Left colon (tissue), 2 donors: ENCODE measurements at regions of chr11 and their contacts with region 1.

Region 1: DNA sequence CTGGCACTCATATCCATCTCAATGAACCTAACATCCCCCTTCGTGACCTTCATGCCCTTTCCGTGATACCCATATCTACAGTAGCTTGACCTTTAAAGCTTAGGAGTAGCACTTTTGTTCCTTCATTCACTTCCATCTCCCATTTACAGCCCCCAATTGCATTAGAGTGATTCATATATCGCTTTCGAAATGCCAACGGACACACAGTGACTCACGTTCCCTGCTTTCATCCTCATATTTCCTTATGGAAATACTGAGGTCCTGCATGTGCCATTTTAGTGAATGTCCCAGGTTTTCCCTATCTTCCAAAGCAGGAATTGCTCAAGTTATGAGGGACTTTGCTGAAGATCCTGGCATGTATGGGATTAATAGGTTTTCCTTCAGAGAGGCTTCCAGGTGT is 44.3 kb upstream of the CEP126 start:
- DNase-seq: no peak
- ATAC-seq: peak; percentile 44

Region 2: GRCh38 chr11:101929294-101929916 is 58.9 kb after region 1 on chr11:
- intact Hi-C with region 1: no loop called
- DNase-seq: no peak
- ATAC-seq: no peak

Region 3: GRCh38 chr11:101987370-101987769 is 116.9 kb after region 1 on chr11:
- intact Hi-C with region 1: loop called in 1 of 2 experiments (anchors 10 kb)
- DNase-seq: no peak
- ATAC-seq: no peak